ENCODE measurements at regions of chr12 and their contacts with region 1.

Region 1: DNA sequence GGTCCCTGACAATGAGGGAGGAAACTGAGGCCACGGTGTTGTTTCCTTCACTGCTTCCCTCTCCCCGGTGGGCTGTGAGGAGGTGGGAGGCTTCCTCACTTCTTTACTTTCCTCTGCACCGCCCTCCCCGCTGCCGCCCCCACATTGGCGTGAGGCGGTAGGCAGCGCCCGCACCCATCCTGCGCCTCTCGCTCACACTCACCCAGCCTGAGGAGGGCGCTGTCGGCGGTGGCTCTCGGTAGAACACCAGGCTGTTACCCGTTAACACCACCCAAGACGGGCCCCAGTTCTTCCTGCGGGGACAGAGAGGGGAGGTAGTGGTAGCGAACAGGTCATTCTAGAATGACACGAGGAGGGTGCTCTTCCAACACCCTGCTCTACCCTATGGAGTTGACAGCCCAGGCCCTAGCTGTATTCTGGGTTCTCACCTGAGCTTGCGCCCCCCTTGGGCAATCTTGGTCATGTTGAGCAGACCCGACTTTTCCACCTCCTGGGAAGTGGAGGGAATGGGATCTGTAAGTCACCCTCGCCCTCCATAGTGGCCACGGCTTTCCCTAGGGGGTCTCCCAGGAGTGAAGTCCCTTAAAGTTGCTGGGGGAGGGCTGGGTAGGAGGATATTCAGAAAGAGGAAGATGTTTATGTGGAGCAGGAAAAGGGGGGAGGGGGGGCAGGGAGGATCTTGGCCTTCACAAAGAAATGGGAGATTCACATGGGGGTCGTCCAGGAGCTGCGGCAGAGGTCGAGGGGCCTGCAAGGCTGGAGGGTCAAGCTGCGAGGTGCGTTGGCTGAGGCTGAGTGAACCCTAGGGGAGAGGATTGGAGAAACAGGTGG is 3.3 kb downstream of the ARHGAP9 start:
- DNase-seq: peak; percentile 50
- H3K4me3 ChIP-seq: peak overlapping the region; percentile 1 to 44 (median 24)
- H3K27ac ChIP-seq: peak overlapping the region; percentile 65 to 81 (median 78)
- H3K4me1 ChIP-seq: peaks cover 15 to 37% (median 17%) of the 10 kb centered on the region in 4 donors
- H3K27me3 ChIP-seq: peaks cover 86% of the 10 kb centered on the region
- CTCF ChIP-seq: peak in 2 of 5 experiments; percentile 11 to 20
- EP300 ChIP-seq: no peak
- POLR2A ChIP-seq: no peak

Region 2: DNA sequence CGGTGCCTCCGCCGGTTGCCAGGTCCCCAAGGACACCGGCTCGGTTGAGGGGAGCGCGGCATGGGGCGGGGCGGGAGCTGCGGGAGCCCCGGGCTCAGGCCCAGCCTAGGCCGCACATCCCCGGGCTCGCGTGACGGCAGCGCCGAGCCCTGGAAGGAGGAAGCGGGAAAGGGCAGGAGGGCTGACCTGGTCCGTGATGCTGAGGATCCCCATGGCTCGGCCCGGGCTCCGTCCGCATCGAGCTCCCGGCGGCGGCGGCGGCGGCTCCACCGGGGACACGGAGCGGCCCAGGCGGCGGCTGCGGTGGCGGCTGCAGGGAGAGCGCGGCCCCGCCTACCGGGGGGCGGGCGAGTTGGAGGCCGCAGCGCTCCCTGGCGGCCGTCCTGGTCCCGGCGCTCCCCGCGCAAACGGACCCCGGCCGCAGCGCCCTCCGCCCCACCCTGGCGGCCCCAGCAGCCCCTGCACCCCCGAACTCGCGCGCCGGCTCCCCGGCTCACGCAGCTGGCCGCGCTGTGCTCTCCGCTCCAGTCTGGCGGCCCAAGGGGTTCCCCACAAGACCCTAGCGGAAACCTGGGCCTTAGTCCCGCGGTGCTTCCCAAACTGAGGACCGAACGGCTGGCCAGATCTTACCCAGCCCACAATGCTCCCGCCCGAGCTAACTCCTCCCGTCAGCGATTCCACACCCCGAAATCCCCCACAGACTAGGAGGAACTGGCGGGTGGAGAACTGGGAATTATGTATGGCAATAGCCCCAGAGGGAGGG is 1218.1 kb before region 1 on chr12 and contains the start of gene ANKRD52:
- in situ Hi-C with region 1: no loop called
- intact Hi-C with region 1: no loop called
- DNase-seq: peak; percentile 81
- H3K4me3 ChIP-seq: peak within 1 kb of the TSS; percentile 66 to 83 (median 72)
- H3K27ac ChIP-seq: peak within 1 kb of the TSS; percentile 87 to 93 (median 90)
- H3K4me1 ChIP-seq: peaks cover 16 to 23% (median 22%) of the 10 kb centered on the region in 4 donors
- H3K27me3 ChIP-seq: no peaks in the 10 kb centered on the region
- CTCF ChIP-seq: peak; percentile 36 to 80 (median 64)
- EP300 ChIP-seq: no peak
- POLR2A ChIP-seq: no peak
- total RNA-seq, gene ANKRD52: 28.4 to 120 (median 40.0) TPM

Region 3: DNA sequence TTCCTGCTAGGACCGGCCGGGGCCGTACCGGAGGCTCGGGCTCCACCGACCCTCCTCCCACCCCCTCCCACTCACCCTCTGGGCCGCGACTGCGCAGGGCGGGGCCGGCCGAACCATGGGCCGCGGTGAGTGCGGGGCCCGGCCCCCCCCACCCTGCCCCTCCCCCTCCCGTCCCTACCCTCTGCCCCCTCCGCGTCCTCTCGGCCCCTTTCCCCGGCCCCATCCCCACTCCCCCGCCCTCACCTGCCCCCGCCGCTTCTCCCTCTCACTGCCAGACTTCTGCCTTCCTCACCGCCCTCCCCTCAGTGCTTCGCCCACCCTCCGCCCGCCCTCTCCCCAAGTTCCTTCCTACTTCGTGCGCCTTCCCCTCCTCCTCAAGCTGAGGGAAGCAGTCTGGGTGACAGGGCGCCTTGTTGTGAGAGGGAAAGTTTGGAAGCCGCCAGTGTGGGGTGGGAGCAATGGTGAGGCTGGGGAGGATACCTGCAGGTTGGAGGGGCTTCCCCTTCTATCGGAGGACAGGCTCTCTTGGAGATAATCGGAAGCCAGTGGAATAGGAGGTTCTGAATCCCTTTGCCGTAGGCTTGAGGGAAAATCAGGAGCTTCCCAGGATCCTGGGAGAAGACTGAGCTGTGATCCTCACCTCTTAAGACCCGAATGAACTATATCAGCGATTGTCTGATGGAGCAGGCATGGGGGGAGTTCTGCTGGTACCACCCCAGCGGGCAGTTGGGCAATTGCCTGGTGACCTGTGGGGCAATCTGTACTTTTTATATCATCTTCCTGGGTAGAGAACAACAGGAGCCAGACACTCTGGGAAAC is 46.7 kb after region 1 on chr12:
- in situ Hi-C with region 1: no loop called
- intact Hi-C with region 1: loop called (anchors 1 kb)
- DNase-seq: peak; percentile 54
- H3K4me3 ChIP-seq: peak overlapping the region; percentile 68 to 82 (median 78)
- H3K27ac ChIP-seq: peak overlapping the region; percentile 97 to 100 (median 98)
- H3K4me1 ChIP-seq: peaks cover 33 to 58% (median 52%) of the 10 kb centered on the region in 4 donors
- H3K27me3 ChIP-seq: no peaks in the 10 kb centered on the region
- CTCF ChIP-seq: no peak
- EP300 ChIP-seq: no peak
- POLR2A ChIP-seq: peak; percentile 5

Region 4: GRCh38 chr12:57591480-57592325 is 115.3 kb after region 1 on chr12:
- in situ Hi-C with region 1: no loop called
- intact Hi-C with region 1: no loop called
- DNase-seq: peak; percentile 23
- H3K4me3 ChIP-seq: peak overlapping the region; percentile 74 to 91 (median 78)
- H3K27ac ChIP-seq: peak overlapping the region; percentile 81 to 89 (median 85)
- H3K4me1 ChIP-seq: peaks cover 7 to 20% (median 17%) of the 10 kb centered on the region in 4 donors
- H3K27me3 ChIP-seq: peaks cover 7% of the 10 kb centered on the region
- CTCF ChIP-seq: peak in 1 of 5 experiments; percentile 5
- EP300 ChIP-seq: no peak
- POLR2A ChIP-seq: no peak

Measured in transverse colon (tissue), 4 donors.